Cardiac septum (tissue), 1 donor: ENCODE measurements at regions of chr9 and their contacts with region 1.

Region 1: GRCh38 chr9:4762108-4762885 is 21.3 kb upstream of the AK3 start:
- DNase-seq: peak; percentile 83

Region 2: GRCh38 chr9:3809724-3810123 is 952.6 kb before region 1 on chr9:
- intact Hi-C with region 1: no loop called
- DNase-seq: no peak

Region 3: DNA sequence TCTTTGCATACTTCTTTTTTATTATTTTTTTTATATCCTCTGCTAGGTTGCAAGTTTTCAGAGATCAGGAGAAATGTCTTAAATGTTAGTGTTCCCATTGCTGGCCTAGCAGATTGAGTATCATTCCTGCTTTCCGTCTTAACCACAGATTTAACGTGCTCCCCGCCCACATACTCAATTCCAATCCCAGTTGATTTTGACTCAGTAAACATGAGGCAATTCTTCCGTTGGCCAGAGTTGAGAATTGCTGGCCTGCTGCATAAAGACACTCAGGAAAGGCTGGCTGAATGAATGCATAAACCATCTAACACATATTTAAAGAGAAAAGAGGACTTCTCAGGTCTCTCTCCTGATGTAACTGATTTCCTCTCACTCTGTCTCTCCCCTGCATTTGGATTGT is 147.0 kb before region 1 on chr9:
- intact Hi-C with region 1: no loop called
- DNase-seq: no peak

Region 4: GRCh38 chr9:4792572-4793458 is 30.5 kb after region 1 on chr9 and contains the start of gene RCL1:
- intact Hi-C with region 1: loop called (anchors 5 kb)
- DNase-seq: peak; percentile 99
- total RNA-seq, gene RCL1: 8.5 TPM

Region 5: DNA sequence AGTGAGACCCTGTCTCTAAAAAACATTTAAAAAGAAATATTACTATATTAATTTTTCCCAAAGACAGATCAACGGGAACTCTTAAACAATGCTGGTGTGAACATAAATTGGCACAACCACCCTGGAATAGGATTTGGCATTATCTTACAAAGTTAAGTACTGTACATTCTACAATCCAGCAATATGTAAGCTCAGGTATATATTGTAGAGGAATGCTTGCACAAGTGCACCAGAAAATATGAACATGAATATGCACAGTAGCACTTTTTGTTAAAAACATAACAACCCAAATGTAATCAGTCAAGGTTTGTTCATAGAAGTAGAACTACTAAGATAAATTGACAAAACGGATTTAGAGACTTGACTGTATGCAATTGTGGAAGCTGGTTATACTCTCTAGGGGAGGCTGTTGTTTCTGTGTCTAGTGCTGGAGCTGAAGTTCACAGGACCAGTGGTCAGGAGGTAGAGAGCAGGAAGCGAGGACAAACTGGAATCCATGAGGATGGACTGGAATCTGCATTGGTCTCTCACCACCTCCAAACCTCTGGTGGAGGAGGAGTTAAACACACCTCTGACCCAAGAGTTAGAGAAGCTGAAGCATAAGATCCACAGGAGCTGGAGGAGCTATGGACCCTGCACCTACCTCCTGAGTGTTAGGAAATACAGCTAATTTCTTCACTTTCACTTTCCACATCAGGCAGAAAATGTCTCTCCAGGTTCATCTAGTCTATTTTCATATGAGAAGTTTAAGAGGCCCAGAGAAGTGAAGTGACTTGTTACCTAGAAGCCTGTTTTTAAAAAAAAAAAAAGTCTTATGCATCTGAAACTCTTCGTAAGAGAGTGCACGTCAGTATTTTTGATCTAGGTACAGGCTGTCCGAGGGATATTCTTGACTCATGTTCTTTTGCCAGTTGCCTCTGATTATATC is 846.3 kb after region 1 on chr9:
- intact Hi-C with region 1: loop called (anchors 10 kb)
- DNase-seq: no peak